Left cardiac atrium (tissue), 4 donors: ENCODE measurements at regions of chrX and their contacts with region 1.

Region 1: DNA sequence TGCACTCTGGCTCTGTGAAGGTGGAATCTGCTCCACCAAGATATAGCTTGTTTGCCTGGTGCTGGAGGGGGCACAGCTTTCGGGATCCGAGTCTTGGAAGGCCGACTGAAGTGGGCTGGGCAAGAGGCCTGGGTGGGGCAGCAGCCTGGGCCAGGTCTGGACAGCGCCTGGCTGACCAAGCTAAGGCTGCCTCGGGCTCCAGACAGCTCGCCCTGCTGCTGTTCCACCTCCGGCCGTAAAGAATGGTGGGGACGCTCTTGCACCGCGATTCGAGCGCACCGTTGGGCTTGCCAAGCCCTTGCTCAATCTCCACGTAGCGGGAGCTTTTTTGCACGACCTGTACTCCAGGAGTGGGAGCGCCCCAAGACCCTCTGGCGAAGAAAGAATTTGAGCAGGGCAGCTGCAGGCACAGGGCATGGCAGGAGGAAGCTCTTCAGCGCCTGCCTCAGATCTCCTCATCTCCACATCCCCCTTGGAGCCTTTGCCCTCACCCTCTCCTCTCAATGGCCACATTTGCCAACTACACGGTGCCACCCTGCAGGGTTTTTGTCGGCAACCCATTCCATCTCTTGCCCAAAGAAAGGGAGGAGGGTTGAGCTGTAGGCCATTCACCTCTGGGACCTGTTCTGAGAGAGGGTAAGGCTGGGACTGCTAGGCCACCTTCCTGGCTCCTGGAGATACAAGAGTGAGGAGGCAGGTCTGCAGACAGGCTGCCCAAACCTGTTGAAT is 18.9 kb downstream of the CNGA2 start:
- DNase-seq: peak; percentile 56
- ATAC-seq: peak; percentile 92 to 95

Region 2: DNA sequence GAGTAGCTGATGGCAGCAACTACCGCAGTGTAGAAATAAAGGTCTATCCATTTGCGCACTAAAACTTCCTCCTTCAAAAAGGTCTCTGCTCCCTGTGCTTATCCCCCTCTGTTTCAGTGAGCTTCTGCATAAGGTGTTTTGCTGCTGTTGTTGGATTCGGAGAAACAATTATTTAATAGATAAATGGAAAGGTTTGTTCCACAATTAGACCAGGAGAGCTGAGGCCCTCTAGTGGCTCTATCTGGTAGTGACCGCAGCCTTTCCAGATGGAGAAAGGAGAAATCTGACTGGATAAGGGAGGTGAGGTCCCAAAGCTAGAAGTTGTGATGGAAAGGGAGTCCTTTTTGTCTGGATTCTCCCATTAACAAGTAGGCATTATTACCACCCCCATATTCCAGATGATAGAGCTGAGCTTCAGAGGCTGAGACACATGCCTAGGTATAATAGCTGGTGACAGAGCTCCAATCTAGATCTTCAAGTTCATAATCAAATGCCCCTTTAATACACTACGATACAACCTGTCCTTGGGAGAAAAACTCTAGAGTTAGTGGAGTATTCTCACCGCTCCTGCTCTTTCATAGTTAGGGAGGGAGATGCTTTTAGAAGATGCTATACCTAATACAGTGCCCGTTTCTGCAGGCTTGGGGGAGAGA is 879.1 kb after region 1 on chrX:
- intact Hi-C with region 1: loop called (anchors 2 to 5 kb)
- DNase-seq: peak; percentile 33
- ATAC-seq: no peak

Region 3: GRCh38 chrX:152810403-152810802 is 1056.9 kb after region 1 on chrX:
- intact Hi-C with region 1: loop called in 1 of 2 experiments (anchors 5 kb)
- DNase-seq: no peak
- ATAC-seq: no peak